ENCODE measurements at regions of chr6 and their contacts with region 1.

Region 1: GRCh38 chr6:32244946-32245398 is 21.1 kb upstream of the NOTCH4 start:
- DNase-seq: peak; percentile 17 to 93
- H3K4me3 ChIP-seq: peak overlapping the region in 1 of 4 experiments; percentile 37; a peak in 2 of 8 replicates
- H3K27ac ChIP-seq: no peak overlapping the region
- H3K4me1 ChIP-seq: no peaks in the 10 kb centered on the region
- H3K27me3 ChIP-seq: no peaks in the 10 kb centered on the region
- CTCF ChIP-seq: peak; percentile 85 to 91 (median 90)
- EP300 ChIP-seq: no peak
- POLR2A ChIP-seq: no peak
- RAD21 ChIP-seq: peak; percentile 87 to 90

Region 2: DNA sequence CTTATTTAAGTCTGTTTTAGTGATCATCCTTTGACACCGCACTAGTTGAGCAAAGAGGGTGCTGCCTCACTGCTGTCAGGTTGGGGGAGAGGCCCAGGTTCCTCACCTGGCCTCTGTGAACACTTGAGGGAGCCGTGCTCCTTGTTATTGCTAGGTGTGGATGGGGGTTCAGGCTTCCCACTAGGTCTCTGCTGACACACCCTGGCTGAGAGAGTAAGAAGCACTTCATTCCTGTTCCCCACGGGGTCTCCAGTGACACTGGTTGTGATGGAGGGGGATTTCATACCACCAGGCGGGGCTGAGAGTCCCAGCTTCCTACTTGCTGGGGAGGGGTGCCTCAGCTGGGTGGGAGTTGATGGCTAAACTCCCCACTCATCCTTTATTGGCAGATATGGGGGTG is 10.0 kb before region 1 on chr6:
- CTCF ChIA-PET with region 1: interaction called, 22 read pairs
- POLR2A ChIA-PET with region 1: no interaction called
- DNase-seq: peak in 1 of 2 experiments; percentile 19
- H3K4me3 ChIP-seq: no peak overlapping the region
- H3K27ac ChIP-seq: no peak overlapping the region
- H3K4me1 ChIP-seq: no peaks in the 10 kb centered on the region
- H3K27me3 ChIP-seq: no peaks in the 10 kb centered on the region; a peak in 1 of 7 replicates
- CTCF ChIP-seq: peak; percentile 40 to 87 (median 54)
- EP300 ChIP-seq: no peak
- POLR2A ChIP-seq: no peak
- RAD21 ChIP-seq: peak; percentile 71 to 76

Region 3: GRCh38 chr6:32255199-32256153 is 10.5 kb after region 1 on chr6:
- CTCF ChIA-PET with region 1: interaction called, 33 read pairs
- POLR2A ChIA-PET with region 1: interaction called, 4 read pairs
- DNase-seq: peak; percentile 62 to 80
- H3K4me3 ChIP-seq: peak overlapping the region; percentile 22 to 69 (median 38); a peak in 7 of 8 replicates
- H3K27ac ChIP-seq: peak overlapping the region; percentile 85
- H3K4me1 ChIP-seq: peaks cover 2 to 5% (median 3%) of the 10 kb centered on the region in 4 experiments; a peak in 4 of 7 replicates
- H3K27me3 ChIP-seq: no peaks in the 10 kb centered on the region
- CTCF ChIP-seq: peak; percentile 63 to 82 (median 75)
- EP300 ChIP-seq: no peak
- POLR2A ChIP-seq: peak; percentile 75 to 83
- RAD21 ChIP-seq: peak; percentile 21 to 54; a peak in 3 of 4 replicates

Region 4: DNA sequence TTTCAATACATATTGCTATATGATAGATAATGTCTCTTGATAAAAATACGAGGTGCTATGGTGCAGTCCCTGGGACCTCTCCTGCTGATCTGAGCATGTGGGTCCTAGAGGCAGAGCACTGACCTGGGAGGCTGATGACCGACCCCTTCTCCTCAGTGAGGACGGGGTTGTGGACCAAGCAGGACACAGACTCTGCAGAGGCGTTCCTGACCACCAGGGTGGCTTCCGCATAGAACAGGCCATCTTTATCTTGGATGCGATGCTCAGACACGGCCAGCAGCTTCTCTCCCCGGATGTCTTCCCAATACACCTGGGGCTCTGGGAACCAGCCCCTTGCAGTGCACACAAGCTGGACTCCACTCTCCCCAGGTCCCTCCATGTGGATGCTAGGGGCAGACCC is 157.8 kb after region 1 on chr6:
- CTCF ChIA-PET with region 1: interaction called, 16 read pairs
- POLR2A ChIA-PET with region 1: no interaction called
- DNase-seq: no peak
- H3K4me3 ChIP-seq: no peak overlapping the region
- H3K27ac ChIP-seq: no peak overlapping the region
- H3K4me1 ChIP-seq: peaks cover 0 to 6% (median 2%) of the 10 kb centered on the region in 4 experiments; a peak in 3 of 7 replicates
- H3K27me3 ChIP-seq: no peaks in the 10 kb centered on the region
- CTCF ChIP-seq: peak; percentile 1 to 23 (median 10); a peak in 3 of 4 replicates
- EP300 ChIP-seq: no peak
- POLR2A ChIP-seq: no peak
- RAD21 ChIP-seq: no peak

Measured in H1 (cell line).